BJ (cell line): ENCODE measurements at regions of chr20 and their contacts with region 1.

Region 1: GRCh38 chr20:17536944-17537444 is 5.8 kb upstream of the BFSP1 start:
- DNase-seq: no peak
- H3K4me3 ChIP-seq: no peak overlapping the region
- H3K27me3 ChIP-seq: no peaks in the 10 kb centered on the region
- CTCF ChIP-seq: peak; percentile 91

Region 2: GRCh38 chr20:17569616-17570346 is 32.8 kb after region 1 on chr20 and contains the start of gene DSTN:
- CTCF ChIA-PET with region 1: interaction called, 35 read pairs
- POLR2A ChIA-PET with region 1: interaction called, 13 read pairs
- DNase-seq: peak; percentile 70
- H3K4me3 ChIP-seq: peak within 1 kb of the TSS; percentile 98
- H3K27me3 ChIP-seq: no peaks in the 10 kb centered on the region
- CTCF ChIP-seq: no peak
- polyA plus RNA-seq, gene DSTN: 295 and 536 TPM in 2 replicates

Region 3: DNA sequence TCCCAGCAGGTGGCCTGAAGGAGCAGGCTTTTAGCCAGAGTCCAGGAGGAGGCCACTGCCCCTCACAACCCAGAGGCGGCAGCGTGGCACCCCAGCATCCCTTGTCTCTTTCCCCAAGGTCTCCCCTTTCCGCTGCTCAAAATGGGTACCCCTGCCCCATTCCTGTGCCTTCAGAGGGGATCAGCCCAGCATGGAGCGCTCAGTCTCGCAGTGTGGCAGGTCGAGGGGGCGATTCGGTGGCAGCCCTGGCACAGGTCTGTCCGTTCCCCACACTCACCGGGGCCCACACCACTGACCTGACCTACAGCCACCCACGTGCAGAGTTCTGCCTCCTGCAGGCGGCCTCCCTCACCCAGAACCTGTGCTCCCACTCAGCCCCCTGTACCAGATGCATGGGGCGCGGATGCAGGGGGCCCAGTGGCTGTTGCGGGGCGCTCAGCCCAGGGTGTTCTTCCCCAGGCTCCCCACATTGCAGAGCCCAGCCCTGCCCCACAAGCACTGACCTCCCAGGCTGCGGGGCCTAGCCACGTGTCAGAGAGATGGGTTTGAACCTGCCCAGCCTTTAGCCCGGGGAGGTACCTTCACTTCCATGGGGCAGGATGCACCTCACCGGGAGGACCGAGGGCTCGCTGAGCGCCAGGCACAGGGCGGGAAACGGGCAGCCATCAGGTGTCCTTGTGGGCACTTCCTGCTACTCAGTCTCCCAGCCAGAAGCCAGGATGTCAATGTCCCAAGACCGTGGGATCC is 74.7 kb after region 1 on chr20:
- CTCF ChIA-PET with region 1: interaction called, 17 read pairs
- POLR2A ChIA-PET with region 1: no interaction called
- DNase-seq: no peak
- H3K4me3 ChIP-seq: no peak overlapping the region
- H3K27me3 ChIP-seq: no peaks in the 10 kb centered on the region
- CTCF ChIP-seq: peak; percentile 55

Region 4: GRCh38 chr20:17674722-17675524 is 137.9 kb after region 1 on chr20:
- CTCF ChIA-PET with region 1: no interaction called
- POLR2A ChIA-PET with region 1: no interaction called
- DNase-seq: no peak
- H3K4me3 ChIP-seq: no peak overlapping the region
- H3K27me3 ChIP-seq: no peaks in the 10 kb centered on the region
- CTCF ChIP-seq: no peak